ENCODE measurements at regions of chrX and their contacts with region 1.

Region 1: DNA sequence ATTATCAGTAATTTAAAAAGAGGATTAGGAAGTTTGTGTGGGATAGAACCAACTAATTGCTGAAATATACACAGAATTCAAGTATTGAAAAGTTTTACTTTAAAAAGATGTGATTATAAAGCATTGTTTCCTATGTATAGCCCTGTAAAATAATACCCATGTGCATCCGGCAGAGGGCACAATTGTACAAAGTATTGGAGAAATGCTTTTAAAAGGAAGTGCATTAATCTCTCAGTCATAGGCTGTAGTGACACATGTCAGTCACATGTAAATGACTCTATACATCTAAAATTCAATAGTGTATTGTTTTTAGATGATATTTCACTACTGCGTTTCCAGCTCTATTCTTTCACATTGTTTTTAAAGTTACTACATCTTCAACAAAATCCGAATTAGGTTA is 9.7 kb upstream of the GEMIN8 start:
- DNase-seq: peak; percentile 30
- ATAC-seq: peak in 1 of 2 donors; percentile 58

Region 2: GRCh38 chrX:13492286-13492685 is 547.1 kb before region 1 on chrX:
- intact Hi-C with region 1: no loop called
- DNase-seq: no peak
- ATAC-seq: no peak

Region 3: GRCh38 chrX:13923845-13924244 is 115.5 kb before region 1 on chrX:
- intact Hi-C with region 1: no loop called
- DNase-seq: no peak
- ATAC-seq: no peak

Region 4: DNA sequence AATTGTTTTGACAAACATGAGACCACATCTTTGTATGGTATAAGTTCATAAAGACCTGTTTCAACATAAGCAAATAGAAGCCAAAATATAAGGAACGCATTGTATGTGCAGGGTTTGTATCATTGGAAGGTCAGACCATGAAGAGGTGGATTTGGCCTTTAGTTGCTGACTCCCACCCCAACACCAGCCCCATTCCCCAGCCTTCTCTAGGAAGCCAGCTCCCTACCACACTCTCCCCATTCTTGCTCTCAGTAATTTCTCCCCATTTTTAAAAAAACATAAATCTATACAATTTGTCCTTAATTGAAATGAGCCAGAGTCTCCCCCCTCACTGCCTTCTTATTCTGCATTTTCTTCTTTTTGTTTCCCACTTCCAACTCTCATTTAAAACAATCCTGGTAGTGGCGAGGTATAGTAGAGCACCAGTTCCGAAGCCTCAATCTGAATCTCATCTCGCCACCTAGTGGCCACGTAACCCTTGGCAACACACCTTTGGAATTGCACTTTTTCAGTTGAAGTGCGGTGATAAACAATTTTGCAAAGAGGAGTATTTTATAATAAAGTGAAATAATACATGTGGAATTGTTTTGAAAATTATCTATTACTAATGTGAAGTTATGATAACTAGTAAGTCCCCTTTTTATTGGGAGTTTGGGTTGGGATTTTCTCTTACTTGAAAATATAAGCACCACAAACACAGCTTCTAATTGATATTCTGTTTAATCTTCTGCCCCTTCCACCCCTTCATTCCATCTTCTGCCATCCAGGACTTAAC is 1103.9 kb after region 1 on chrX:
- intact Hi-C with region 1: loop called in 1 of 2 experiments (anchors 10 kb)
- DNase-seq: peak; percentile 44
- ATAC-seq: peak in 1 of 2 donors; percentile 47

Region 5: DNA sequence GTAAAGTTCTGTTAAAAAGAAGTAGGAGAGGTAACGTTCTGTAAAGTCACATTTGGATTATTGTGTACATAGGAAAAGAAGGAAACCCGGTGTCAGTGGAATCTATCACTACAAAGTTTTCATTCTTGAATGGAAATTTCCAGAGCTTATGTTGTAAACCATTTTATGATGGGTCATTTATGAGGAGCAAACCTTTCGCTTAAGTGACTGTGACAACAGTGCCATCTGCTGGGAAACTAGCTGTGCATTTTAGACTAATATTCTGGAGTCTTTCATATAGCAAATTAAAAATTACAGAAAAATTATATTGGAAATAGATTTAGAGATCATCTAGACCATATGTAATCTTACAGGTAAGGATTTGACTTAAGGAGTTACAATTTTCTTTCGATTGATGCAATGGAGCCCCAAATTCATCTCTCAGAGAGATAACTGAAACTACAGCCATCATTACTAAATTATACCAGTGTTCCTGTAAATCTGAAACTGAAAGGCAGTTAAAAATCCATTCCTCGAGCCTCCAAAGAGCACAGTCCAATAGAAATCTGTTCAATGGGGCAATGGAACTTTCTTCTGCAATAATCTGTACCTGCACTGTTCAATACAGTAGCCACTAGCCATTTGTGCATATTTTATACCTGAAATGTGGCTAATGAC is 1203.7 kb after region 1 on chrX:
- intact Hi-C with region 1: loop called in 1 of 2 experiments (anchors 2 kb)
- DNase-seq: no peak
- ATAC-seq: no peak